Breast epithelium (tissue), 4 donors: ENCODE measurements at regions of chr1 and their contacts with region 1.

Region 1: DNA sequence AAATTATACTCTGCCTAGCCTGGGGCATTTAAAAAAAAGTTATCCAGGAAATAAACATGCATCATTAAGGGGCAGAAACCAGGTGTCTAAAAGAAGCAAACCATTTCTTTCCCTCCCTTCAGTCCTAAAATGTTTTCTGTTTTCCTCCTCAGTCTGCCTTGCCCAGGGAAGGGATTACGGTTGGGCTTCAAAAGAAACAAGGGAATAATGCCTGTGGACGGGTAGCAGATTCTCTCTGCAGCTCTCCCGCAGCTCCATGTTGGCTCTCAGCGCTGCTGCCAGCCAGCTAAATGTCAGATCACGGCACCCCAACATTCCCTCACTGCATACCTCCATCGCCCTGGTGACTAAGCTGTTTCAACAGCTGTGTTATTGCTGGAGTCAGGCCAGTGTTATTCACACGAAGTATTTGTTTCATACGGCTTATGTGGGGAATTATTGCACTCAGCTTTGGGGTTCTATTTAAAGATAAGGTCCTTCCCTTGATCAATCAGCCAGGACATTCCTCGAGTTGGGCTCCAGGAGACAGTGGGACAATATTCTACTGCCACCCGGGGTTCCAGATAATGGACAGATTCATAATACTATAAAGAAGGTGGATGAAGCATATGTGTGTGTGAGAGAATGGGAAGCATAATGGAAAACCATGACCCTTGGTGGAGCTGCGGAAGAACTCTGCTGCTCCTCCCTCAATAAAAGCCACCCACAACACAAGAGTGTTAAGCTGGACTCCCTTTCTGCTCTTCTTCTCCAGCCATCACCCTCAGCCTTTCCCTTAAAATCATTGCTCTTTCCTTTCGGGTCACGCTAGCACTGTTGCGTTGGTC is 58.2 kb downstream of the WLS start:
- DNase-seq: peak in 1 of 2 donors; percentile 78
- H3K4me3 ChIP-seq: peak overlapping the region in 1 of 3 donors; percentile 35
- H3K27ac ChIP-seq: peak overlapping the region; percentile 45 to 69
- H3K4me1 ChIP-seq: peaks cover 3 to 11% of the 10 kb centered on the region in 2 donors
- H3K27me3 ChIP-seq: no peaks in the 10 kb centered on the region
- CTCF ChIP-seq: no peak
- POLR2A ChIP-seq: no peak

Region 2: DNA sequence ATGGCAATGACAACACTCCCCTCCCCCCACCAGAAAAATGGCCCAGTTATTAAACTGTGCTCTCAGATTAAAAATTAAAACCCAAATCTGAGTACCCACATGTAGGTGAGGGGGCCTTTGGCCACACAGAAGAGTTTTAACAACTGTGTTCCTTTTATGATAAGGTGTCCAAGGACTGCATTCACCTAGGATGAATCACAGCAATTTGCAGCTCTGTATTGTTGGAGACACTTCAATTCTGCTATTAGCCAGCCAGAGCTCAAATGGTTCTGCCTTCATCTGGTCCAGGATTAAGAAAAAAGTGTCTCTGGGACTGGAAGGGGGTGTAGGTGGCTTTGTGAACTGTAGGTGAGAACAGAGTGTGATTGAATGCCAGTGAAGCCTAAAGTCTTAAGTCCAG is 80.4 kb before region 1 on chr1:
- intact Hi-C with region 1: no loop called
- DNase-seq: no peak
- H3K4me3 ChIP-seq: no peak overlapping the region
- H3K27ac ChIP-seq: no peak overlapping the region
- H3K4me1 ChIP-seq: no peaks in the 10 kb centered on the region
- H3K27me3 ChIP-seq: no peaks in the 10 kb centered on the region
- CTCF ChIP-seq: no peak
- POLR2A ChIP-seq: no peak

Region 3: DNA sequence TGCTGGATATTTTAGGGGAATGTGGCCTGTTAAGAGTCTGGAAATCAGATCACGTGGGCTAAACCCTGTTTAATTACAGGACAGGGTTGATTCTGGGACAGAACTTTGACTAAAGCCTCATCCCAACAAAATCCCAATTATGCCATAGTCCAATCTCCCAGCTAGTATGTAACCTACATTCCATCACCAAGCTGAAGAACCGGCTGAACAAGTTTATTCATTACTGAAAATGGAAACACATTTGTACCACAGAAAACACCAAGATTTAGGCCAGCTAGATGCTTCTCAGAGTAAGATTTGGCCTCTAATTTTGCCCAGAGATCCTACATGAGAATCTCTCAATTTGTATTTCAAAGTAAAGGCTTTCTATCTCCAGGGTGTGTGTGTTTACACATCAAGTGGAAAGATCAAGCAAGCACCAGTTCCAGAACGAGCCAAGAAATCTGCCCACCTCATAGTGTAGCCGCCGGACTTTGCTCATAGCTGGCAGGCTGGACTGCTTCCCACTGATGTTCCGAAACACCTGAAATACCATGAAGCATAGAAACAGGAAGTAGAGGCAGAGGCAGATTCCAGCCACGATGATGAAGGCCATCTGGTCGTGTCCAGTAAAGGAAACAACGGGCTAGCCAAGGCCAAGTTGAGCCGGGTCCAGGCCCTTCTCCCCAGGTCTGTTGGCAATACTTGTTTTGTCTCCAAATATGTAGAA is 28.6 kb before region 1 on chr1:
- intact Hi-C with region 1: loop called (anchors 1 kb)
- DNase-seq: peak in 1 of 2 donors; percentile 77
- H3K4me3 ChIP-seq: no peak overlapping the region
- H3K27ac ChIP-seq: peak overlapping the region; percentile 70 to 71
- H3K4me1 ChIP-seq: peaks cover 0 to 10% of the 10 kb centered on the region in 2 donors
- H3K27me3 ChIP-seq: no peaks in the 10 kb centered on the region
- CTCF ChIP-seq: no peak
- POLR2A ChIP-seq: no peak

Region 4: DNA sequence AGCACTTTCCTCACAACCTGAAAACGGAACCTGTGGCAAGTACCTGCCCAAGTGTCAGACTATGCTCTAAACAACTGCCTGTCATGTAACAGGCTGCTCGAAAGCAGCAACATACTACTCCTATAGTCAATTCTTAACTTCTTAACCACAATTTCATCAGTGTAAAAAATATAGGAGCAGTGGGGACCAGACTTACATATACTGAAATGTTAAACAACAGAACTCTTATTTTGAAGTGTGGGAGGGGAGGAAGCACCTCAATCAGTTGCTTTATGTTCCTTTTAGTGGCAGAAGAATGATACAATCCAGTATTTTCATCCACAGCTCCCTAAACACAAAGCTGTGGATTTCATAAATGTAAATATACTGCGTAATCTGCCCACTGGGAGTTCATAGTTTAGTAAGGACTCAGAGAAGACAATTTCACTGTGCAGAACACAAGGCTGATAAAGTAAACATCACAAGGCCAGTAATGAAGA is 14.0 kb after region 1 on chr1:
- intact Hi-C with region 1: no loop called
- DNase-seq: no peak
- H3K4me3 ChIP-seq: no peak overlapping the region
- H3K27ac ChIP-seq: no peak overlapping the region
- H3K4me1 ChIP-seq: no peaks in the 10 kb centered on the region
- H3K27me3 ChIP-seq: no peaks in the 10 kb centered on the region
- CTCF ChIP-seq: no peak
- POLR2A ChIP-seq: no peak